H1 (cell line): ENCODE measurements at regions of chr4 and their contacts with region 1.

Region 1: GRCh38 chr4:147407261-147408045 is 73.4 kb upstream of the EDNRA start:
- DNase-seq: peak; percentile 25 to 56
- H3K4me3 ChIP-seq: no peak overlapping the region
- H3K27ac ChIP-seq: no peak overlapping the region
- H3K4me1 ChIP-seq: no peaks in the 10 kb centered on the region
- H3K27me3 ChIP-seq: no peaks in the 10 kb centered on the region
- CTCF ChIP-seq: peak; percentile 75 to 92 (median 87)
- EP300 ChIP-seq: no peak
- POLR2A ChIP-seq: no peak
- RAD21 ChIP-seq: peak; percentile 62 to 73

Region 2: GRCh38 chr4:147299205-147299604 is 108.2 kb before region 1 on chr4:
- CTCF ChIA-PET with region 1: no interaction called
- POLR2A ChIA-PET with region 1: no interaction called
- DNase-seq: no peak
- H3K4me3 ChIP-seq: no peak overlapping the region
- H3K27ac ChIP-seq: no peak overlapping the region
- H3K4me1 ChIP-seq: no peaks in the 10 kb centered on the region
- H3K27me3 ChIP-seq: no peaks in the 10 kb centered on the region
- CTCF ChIP-seq: no peak
- EP300 ChIP-seq: no peak
- POLR2A ChIP-seq: no peak
- RAD21 ChIP-seq: no peak

Region 3: DNA sequence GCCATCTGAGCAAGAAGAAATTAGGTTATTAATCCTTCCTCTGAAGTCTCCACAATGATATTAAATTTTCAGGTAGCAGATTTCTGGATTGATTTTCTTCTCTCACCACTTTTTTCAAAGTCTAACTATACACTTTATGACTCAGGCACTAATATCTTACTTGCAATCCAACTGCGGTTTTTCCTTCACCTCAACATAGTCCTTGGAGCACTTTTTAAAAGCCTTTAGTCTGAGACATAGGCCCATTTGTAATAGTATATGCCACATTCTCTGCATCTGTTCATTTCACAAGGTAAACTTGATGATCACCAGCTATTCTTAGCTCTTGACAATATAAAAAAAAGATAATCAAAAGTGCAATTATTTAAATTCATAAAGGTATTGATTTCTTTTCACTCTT is 17.6 kb after region 1 on chr4:
- CTCF ChIA-PET with region 1: interaction called, 13 read pairs
- POLR2A ChIA-PET with region 1: no interaction called
- DNase-seq: no peak
- H3K4me3 ChIP-seq: no peak overlapping the region
- H3K27ac ChIP-seq: no peak overlapping the region
- H3K4me1 ChIP-seq: no peaks in the 10 kb centered on the region
- H3K27me3 ChIP-seq: no peaks in the 10 kb centered on the region
- CTCF ChIP-seq: no peak
- EP300 ChIP-seq: no peak
- POLR2A ChIP-seq: no peak
- RAD21 ChIP-seq: no peak

Region 4: DNA sequence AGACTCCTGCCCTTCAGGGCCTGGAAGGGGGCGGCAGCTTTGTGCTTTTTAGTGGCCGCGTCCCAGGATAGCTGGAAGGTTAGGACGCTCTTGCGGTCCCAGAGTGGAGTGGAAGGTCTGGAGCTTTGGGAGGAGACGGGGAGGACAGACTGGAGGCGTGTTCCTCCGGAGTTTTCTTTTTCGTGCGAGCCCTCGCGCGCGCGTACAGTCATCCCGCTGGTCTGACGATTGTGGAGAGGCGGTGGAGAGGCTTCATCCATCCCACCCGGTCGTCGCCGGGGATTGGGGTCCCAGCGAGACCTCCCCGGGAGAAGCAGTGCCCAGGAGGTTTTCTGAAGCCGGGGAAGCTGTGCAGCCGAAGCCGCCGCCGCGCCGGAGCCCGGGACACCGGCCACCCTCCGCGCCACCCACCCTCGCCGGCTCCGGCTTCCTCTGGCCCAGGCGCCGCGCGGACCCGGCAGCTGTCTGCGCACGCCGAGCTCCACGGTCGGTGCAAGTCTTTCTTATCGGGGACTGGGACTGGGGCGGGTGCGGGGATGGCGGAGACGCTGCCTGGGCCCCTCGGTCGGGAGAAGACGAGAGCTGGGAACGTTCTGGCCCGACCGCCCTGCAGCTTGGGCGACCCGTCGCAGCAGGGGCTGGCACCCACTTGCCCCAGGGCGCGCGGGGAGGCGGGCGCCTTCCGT is 73.6 kb after region 1 on chr4 and contains the start of gene EDNRA:
- CTCF ChIA-PET with region 1: interaction called, 11 read pairs
- POLR2A ChIA-PET with region 1: no interaction called
- DNase-seq: peak in 1 of 2 experiments; percentile 66
- H3K4me3 ChIP-seq: peak within 1 kb of the TSS; percentile 59 to 83 (median 68)
- H3K27ac ChIP-seq: no peak within 1 kb of the TSS
- H3K4me1 ChIP-seq: no peaks in the 10 kb centered on the region; a peak in 1 of 7 replicates
- H3K27me3 ChIP-seq: peaks cover 4 to 21% (median 17%) of the 10 kb centered on the region in 4 experiments
- CTCF ChIP-seq: no peak
- EP300 ChIP-seq: no peak
- POLR2A ChIP-seq: no peak
- RAD21 ChIP-seq: no peak
- total RNA-seq, gene EDNRA: 3.3 TPM in 2 replicates

Region 5: GRCh38 chr4:147599764-147600163 is 192.3 kb after region 1 on chr4:
- CTCF ChIA-PET with region 1: no interaction called
- POLR2A ChIA-PET with region 1: no interaction called
- DNase-seq: no peak
- H3K4me3 ChIP-seq: no peak overlapping the region
- H3K27ac ChIP-seq: no peak overlapping the region
- H3K4me1 ChIP-seq: peaks cover 0 to 3% (median 0%) of the 10 kb centered on the region in 4 experiments; a peak in 1 of 7 replicates
- H3K27me3 ChIP-seq: no peaks in the 10 kb centered on the region
- CTCF ChIP-seq: no peak
- EP300 ChIP-seq: no peak
- POLR2A ChIP-seq: no peak
- RAD21 ChIP-seq: no peak